ENCODE measurements at regions of chr4 and their contacts with region 1.

Region 1: GRCh38 chr4:140153718-140154571 is at the start of gene MAML3:
- DNase-seq: peak; percentile 90
- ATAC-seq: peak; percentile 40
- H3K4me3 Mint-ChIP-seq: peak within 1 kb of the TSS; percentile 86
- H3K27ac Mint-ChIP-seq: peak within 1 kb of the TSS; percentile 80
- H3K4me1 Mint-ChIP-seq: peaks cover 37% of the 10 kb centered on the region
- H3K27me3 Mint-ChIP-seq: peaks cover 13% of the 10 kb centered on the region
- total RNA-seq, gene MAML3: 1.6 to 1.9 TPM

Region 2: DNA sequence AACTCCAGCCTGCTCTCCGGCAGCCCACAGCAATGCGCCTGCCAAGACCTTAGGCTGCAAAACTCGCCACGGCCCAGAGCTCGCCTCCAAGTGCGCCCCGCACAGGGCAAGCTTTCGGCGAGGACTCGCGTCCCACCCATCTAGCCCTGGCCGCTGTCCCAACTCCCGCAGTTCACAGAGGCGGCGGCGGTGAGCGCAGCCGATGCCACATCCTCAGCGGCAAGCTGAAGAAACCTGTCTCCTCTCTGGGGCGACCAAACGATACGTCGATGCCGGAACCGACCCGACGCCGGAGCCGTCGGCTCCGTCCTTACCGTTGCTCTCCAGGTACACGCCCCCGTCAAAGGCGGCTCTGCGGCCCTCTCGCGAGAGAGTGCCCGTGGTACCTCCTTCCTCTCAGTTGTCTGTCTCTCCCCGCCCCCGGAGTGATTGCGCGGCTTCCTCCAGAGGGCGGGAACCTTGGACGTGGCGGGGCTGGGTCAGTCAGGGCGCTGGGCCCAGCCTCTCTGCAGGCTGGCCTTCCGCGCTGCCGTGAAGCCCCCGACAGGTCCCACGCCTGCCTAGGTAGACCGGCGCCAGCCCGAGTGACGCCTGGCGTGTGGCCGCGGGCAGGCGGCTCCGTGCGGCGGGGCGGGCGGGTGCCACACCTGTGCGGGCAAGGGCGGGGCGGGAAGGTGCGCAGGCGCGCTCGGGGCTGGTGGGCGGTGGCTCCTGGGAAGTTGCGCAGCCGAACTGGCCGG is 700.4 kb before region 1 on chr4:
- CTCF ChIA-PET with region 1: no interaction called
- POLR2A ChIA-PET with region 1: no interaction called
- intact Hi-C with region 1: loop called in 1 of 2 experiments (anchors 5 kb)
- DNase-seq: peak; percentile 99
- ATAC-seq: peak; percentile 90
- H3K4me3 Mint-ChIP-seq: peak overlapping the region; percentile 91
- H3K27ac Mint-ChIP-seq: peak overlapping the region; percentile 98
- H3K4me1 Mint-ChIP-seq: peaks cover 48% of the 10 kb centered on the region
- H3K27me3 Mint-ChIP-seq: no peaks in the 10 kb centered on the region

Region 3: GRCh38 chr4:139734875-139735380 is 419.0 kb before region 1 on chr4:
- CTCF ChIA-PET with region 1: no interaction called
- POLR2A ChIA-PET with region 1: no interaction called
- intact Hi-C with region 1: loop called in 1 of 2 experiments (anchors 1 kb)
- DNase-seq: peak; percentile 86
- ATAC-seq: peak; percentile 83
- H3K4me3 Mint-ChIP-seq: peak overlapping the region; percentile 65
- H3K27ac Mint-ChIP-seq: no peak overlapping the region
- H3K4me1 Mint-ChIP-seq: peaks cover 13% of the 10 kb centered on the region
- H3K27me3 Mint-ChIP-seq: peaks cover 33% of the 10 kb centered on the region

Region 4: GRCh38 chr4:139988863-139989733 is 164.8 kb before region 1 on chr4:
- CTCF ChIA-PET with region 1: no interaction called
- POLR2A ChIA-PET with region 1: no interaction called
- intact Hi-C with region 1: no loop called
- DNase-seq: peak; percentile 76
- ATAC-seq: peak; percentile 99
- H3K4me3 Mint-ChIP-seq: no peak overlapping the region
- H3K27ac Mint-ChIP-seq: no peak overlapping the region
- H3K4me1 Mint-ChIP-seq: peaks cover 14% of the 10 kb centered on the region
- H3K27me3 Mint-ChIP-seq: no peaks in the 10 kb centered on the region

Region 5: GRCh38 chr4:140071806-140072205 is 82.1 kb before region 1 on chr4:
- CTCF ChIA-PET with region 1: interaction called, 3 read pairs
- POLR2A ChIA-PET with region 1: interaction called, 5 read pairs
- intact Hi-C with region 1: loop called (anchors 1 to 2 kb)
- DNase-seq: peak; percentile 85
- ATAC-seq: peak; percentile 85
- H3K4me3 Mint-ChIP-seq: peak overlapping the region; percentile 29
- H3K27ac Mint-ChIP-seq: peak overlapping the region; percentile 56
- H3K4me1 Mint-ChIP-seq: peaks cover 44% of the 10 kb centered on the region
- H3K27me3 Mint-ChIP-seq: peaks cover 15% of the 10 kb centered on the region

Region 6: DNA sequence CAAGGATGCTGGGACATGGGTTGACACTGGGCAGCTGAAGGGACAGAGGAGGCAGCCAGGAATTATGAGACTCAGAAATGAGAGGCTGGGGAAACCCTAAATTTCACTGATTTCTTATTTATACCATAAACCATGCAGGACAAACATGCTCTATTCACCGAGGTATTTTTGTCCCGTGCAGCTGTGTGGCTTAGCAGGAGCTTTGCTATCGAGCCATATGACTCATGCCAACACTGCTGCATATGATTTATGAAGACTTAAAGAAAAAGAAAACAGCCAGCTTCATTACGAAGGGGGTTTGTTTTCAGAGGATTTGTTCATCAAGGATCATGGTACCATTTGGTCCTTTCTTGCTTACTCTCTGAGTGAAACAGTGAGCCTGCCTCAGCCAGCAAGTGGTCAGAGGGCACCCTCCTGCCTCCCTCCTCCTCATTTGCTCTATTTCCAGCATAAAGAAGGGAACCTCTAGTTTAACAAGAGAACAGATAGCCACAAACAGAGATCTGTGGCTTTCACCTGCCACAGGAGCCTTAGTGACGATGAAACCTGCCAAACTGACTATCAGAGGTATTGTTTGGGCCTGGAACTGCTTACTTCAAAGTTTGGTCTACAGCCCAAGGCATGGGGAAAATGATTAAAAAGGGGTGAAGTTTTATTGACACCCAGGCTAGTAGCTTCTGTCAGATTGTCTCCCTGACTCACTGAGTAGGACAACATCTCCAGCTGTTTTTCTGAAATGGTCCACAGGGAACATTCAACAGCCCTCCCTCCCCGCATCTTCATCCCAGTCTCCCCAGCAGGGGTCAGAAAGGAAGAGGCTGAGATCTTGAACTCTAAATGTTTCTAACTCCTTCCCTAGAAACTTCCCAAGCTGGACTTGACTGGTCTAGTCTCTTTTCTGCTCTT is 80.1 kb after region 1 on chr4:
- CTCF ChIA-PET with region 1: interaction called, 4 read pairs
- POLR2A ChIA-PET with region 1: no interaction called
- intact Hi-C with region 1: loop called (anchors 2 to 5 kb)
- DNase-seq: peak; percentile 33
- ATAC-seq: peak; percentile 68
- H3K4me3 Mint-ChIP-seq: no peak overlapping the region
- H3K27ac Mint-ChIP-seq: peak overlapping the region; percentile 91
- H3K4me1 Mint-ChIP-seq: peaks cover 18% of the 10 kb centered on the region
- H3K27me3 Mint-ChIP-seq: no peaks in the 10 kb centered on the region